K562 (cell line): ENCODE measurements at regions of chr3 and their contacts with region 1.

Region 1: GRCh38 chr3:187112934-187113793 is 26.1 kb downstream of the RPL39L start:
- DNase-seq: peak in 3 of 4 experiments; percentile 17 to 43 (median 19)
- ATAC-seq: peak; percentile 74
- H3K4me3 ChIP-seq: no peak overlapping the region
- H3K27ac ChIP-seq: no peak overlapping the region
- H3K4me1 ChIP-seq: no peaks in the 10 kb centered on the region; a peak in 1 of 5 replicates
- H3K27me3 ChIP-seq: no peaks in the 10 kb centered on the region
- CTCF ChIP-seq: peak; percentile 43 to 65 (median 56); a peak in 5 of 6 replicates
- EP300 ChIP-seq: no peak
- POLR2A ChIP-seq: no peak
- RAD21 ChIP-seq: peak; percentile 57 to 64

Region 2: DNA sequence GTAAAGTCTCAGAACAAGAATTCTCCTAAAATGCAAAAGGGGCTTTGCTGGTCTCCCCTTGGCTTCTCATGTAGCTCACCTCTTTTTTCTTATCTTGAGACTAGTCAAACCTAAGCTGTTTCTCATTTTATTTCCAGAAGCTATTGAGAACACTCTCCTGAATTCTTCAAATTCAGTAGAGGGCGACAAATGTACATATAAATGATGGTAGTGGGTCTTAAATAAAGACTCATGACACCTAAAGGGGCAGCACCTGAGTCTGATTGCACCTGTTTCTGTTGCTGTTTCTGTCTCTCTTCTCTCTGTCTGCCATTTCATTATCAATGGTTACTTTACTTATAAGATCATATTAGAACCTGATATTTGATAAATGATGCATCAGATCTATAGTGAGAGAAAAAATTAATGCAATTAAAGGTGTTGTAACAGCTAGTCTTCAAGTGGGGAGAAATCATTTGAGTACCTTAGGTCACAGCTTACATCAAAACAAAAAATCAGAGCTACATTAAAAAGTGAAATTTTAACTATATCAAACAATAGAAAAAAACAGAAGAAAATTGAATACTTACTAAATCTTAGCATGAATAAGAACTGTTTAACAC is 263.7 kb before region 1 on chr3:
- CTCF ChIA-PET with region 1: no interaction called
- POLR2A ChIA-PET with region 1: no interaction called
- in situ Hi-C with region 1: no loop called
- intact Hi-C with region 1: loop called (anchors 1 kb)
- DNase-seq: peak in 2 of 4 experiments; percentile 54 to 61
- ATAC-seq: peak; percentile 92
- H3K4me3 ChIP-seq: no peak overlapping the region
- H3K27ac ChIP-seq: no peak overlapping the region
- H3K4me1 ChIP-seq: no peaks in the 10 kb centered on the region; a peak in 1 of 5 replicates
- H3K27me3 ChIP-seq: no peaks in the 10 kb centered on the region
- CTCF ChIP-seq: peak; percentile 63 to 90 (median 77)
- EP300 ChIP-seq: peak; percentile 33; the same call in 1 of the 2 replicates
- POLR2A ChIP-seq: no peak
- RAD21 ChIP-seq: peak; percentile 96 to 98

Region 3: DNA sequence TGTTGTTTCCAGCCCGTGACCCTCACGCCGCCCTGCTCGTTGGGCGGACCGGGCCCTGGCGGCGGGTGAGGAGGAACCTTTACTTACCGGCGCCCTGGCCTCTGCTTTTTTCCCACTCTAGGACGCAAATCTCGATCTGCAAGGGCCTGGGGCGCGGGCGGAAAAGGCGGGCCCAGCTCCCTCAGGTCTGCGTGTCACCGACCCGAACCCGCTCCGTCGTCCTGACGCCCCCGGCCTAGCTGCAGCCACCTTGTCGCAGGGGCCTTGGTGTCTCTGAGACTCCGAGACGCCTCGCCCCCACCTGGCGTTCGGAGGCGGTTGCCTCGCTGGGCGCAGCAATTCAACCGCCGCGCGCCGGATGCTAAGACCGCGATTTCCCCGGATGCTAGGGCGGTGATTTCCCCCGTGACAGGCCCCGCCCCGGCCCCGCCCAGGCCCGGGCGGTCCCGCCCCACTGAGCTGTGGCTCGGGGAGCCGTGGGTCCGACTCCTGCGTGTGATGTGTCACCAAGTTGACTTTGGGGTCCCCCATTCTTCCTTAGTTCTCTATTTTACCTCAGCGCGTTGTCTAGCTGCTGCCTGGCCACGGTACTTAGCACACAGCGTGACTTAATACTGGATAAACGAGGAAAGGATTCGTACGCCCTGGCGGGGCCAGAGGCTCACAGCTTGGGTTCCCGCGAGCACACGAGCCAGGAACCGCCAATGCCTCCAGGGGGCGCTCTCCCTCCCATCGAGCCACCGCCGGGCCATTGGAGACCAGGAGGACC is 26.1 kb after region 1 on chr3 and contains the start of gene RPL39L:
- CTCF ChIA-PET with region 1: no interaction called
- POLR2A ChIA-PET with region 1: no interaction called
- in situ Hi-C with region 1: no loop called
- intact Hi-C with region 1: loop called (anchors 1 kb)
- DNase-seq: peak; percentile 95 to 96 (median 95)
- ATAC-seq: peak; percentile 99
- H3K4me3 ChIP-seq: peak within 1 kb of the TSS; percentile 80
- H3K27ac ChIP-seq: peak within 1 kb of the TSS; percentile 91
- H3K4me1 ChIP-seq: peaks cover 3 to 8% of the 10 kb centered on the region in 2 experiments; a peak in 3 of 5 replicates
- H3K27me3 ChIP-seq: no peaks in the 10 kb centered on the region
- CTCF ChIP-seq: peak; percentile 88 to 96 (median 94)
- EP300 ChIP-seq: peak; percentile 32; the same call in 1 of the 2 replicates
- POLR2A ChIP-seq: peak; percentile 91
- RAD21 ChIP-seq: peak; percentile 29 to 52
- polyA plus RNA-seq, gene RPL39L: 15.0 to 31.4 TPM

Region 4: DNA sequence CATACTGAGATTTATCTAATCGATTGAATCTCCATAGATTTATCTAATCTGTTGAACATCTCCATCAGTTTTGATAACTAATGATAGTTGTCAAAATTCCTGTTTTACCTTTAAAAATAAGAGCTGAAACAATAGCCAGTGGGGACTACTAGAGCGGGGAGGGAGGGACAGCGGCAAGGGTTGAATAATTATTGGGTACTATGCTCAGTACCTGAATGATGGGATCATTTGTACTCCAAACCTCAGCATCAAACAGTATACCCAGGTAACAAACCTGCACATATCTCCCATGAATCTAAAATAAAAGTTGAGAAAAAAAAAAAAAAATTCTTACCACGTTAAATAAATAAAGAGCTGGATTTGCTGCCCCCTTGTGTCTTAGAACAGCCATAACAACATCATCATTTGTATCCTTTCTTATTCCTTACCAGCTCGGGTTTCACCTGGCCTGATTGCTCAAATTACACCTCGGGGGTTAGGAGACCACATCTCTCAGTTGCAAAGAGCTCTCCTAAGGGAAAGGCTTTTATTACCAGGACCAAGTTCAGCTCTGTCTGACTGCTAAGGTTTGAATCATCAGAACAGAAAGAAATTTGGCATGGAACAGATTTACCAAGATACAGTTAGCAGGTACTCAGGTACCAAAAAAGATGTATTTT is 51.9 kb after region 1 on chr3:
- CTCF ChIA-PET with region 1: interaction called, 13 read pairs
- POLR2A ChIA-PET with region 1: interaction called, 3 read pairs
- in situ Hi-C with region 1: no loop called
- intact Hi-C with region 1: loop called (anchors 1 kb)
- DNase-seq: peak; percentile 53 to 70 (median 64)
- ATAC-seq: peak; percentile 78
- H3K4me3 ChIP-seq: no peak overlapping the region
- H3K27ac ChIP-seq: no peak overlapping the region
- H3K4me1 ChIP-seq: no peaks in the 10 kb centered on the region
- H3K27me3 ChIP-seq: peaks cover 0 to 6% of the 10 kb centered on the region in 2 experiments; a peak in 1 of 5 replicates
- CTCF ChIP-seq: peak; percentile 61 to 75 (median 64); a peak in 5 of 6 replicates
- EP300 ChIP-seq: no peak
- POLR2A ChIP-seq: no peak
- RAD21 ChIP-seq: peak; percentile 67 to 77

Region 5: DNA sequence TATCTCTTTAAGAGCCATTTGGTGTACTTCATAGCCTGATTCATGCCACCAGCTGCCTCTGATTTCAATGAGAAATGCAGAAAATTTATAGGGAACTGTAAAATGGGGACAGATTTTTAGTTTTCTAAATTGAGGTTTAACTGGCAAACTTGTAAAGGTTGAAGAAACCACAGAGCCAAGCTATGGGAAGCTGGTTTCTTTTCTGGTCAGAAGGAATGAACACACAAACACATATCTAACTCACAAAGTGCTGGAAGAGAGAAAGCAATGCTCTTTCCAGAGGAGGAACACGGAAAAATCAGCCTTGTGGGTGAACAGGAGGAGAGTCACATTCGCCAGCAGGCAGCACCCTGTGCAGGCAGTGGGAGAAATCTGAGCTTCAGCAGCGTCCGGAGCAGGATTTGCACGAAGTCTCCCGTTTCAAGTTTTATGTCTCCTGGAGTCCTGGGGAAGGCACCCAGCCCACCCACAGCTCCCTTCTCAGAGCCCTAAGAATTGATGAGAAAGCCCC is 177.9 kb after region 1 on chr3:
- CTCF ChIA-PET with region 1: no interaction called
- POLR2A ChIA-PET with region 1: no interaction called
- in situ Hi-C with region 1: no loop called
- intact Hi-C with region 1: loop called (anchors 10 kb)
- DNase-seq: no peak
- ATAC-seq: no peak
- H3K4me3 ChIP-seq: no peak overlapping the region
- H3K27ac ChIP-seq: no peak overlapping the region
- H3K4me1 ChIP-seq: no peaks in the 10 kb centered on the region; a peak in 3 of 5 replicates
- H3K27me3 ChIP-seq: peaks cover 5 to 11% of the 10 kb centered on the region in 2 experiments; a peak in 4 of 5 replicates
- CTCF ChIP-seq: no peak
- EP300 ChIP-seq: no peak
- POLR2A ChIP-seq: no peak
- RAD21 ChIP-seq: no peak

Region 6: DNA sequence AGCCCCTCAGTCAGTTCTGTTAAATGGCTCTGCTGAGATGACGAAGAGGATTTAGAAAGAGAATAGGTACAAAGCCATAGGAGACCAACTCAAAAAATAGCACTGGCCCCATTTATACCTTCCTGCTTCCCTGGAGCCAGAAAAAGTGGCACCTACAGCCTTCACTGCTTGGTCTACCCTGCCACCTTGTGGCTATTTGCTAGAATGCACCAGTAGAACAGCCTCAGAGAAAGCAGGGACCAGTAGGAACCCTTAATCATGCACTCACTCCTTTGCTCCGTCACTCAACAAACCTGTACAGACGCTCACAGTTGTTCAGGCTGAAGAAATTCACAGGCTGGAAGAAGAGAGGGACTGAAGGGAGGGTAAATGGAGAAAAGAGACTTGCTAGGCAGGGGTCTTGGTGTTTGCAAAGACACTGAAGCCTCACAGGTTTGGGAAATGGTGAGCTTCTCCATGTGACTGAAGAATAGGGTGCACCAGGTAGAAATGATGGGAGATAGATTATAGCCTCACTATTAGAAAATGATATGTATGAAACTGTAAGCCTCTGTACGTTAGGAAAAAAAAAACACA is 601.3 kb after region 1 on chr3:
- CTCF ChIA-PET with region 1: no interaction called
- POLR2A ChIA-PET with region 1: no interaction called
- in situ Hi-C with region 1: no loop called
- intact Hi-C with region 1: loop called (anchors 10 kb)
- DNase-seq: peak; percentile 66 to 76 (median 72)
- ATAC-seq: peak; percentile 92
- H3K4me3 ChIP-seq: no peak overlapping the region
- H3K27ac ChIP-seq: no peak overlapping the region
- H3K4me1 ChIP-seq: no peaks in the 10 kb centered on the region
- H3K27me3 ChIP-seq: no peaks in the 10 kb centered on the region
- CTCF ChIP-seq: peak; percentile 79 to 93 (median 81)
- EP300 ChIP-seq: no peak
- POLR2A ChIP-seq: no peak
- RAD21 ChIP-seq: peak; percentile 92